ENCODE measurements at regions of chr3 and their contacts with region 1.

Region 1: DNA sequence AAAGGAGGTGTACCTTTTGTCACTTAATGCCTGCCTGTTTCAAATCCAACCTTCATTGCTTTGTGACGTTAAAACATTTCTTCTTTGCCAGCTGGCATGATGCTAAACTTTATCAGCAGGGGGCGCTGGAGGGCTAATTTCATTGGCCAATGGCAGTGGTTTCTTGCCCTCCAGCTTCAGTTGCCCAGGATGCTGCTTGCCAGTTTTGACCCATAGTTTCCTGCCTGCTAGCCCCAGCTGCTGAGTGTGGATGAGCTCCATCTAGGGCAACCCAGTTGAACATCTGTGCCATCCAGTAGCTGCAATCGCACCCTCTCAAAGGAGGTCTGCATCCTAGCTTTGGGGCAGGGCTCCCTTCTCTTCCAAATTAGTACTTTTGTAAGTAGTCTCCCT is 22.1 kb downstream of the ACKR2 start:
- DNase-seq: no peak
- H3K4me3 ChIP-seq: no peak overlapping the region
- H3K27ac ChIP-seq: no peak overlapping the region
- H3K4me1 ChIP-seq: peaks cover 0 to 12% (median 11%) of the 10 kb centered on the region in 4 donors
- H3K27me3 ChIP-seq: no peaks in the 10 kb centered on the region
- CTCF ChIP-seq: peak; percentile 78 to 90 (median 83)
- EP300 ChIP-seq: no peak
- POLR2A ChIP-seq: no peak

Region 2: DNA sequence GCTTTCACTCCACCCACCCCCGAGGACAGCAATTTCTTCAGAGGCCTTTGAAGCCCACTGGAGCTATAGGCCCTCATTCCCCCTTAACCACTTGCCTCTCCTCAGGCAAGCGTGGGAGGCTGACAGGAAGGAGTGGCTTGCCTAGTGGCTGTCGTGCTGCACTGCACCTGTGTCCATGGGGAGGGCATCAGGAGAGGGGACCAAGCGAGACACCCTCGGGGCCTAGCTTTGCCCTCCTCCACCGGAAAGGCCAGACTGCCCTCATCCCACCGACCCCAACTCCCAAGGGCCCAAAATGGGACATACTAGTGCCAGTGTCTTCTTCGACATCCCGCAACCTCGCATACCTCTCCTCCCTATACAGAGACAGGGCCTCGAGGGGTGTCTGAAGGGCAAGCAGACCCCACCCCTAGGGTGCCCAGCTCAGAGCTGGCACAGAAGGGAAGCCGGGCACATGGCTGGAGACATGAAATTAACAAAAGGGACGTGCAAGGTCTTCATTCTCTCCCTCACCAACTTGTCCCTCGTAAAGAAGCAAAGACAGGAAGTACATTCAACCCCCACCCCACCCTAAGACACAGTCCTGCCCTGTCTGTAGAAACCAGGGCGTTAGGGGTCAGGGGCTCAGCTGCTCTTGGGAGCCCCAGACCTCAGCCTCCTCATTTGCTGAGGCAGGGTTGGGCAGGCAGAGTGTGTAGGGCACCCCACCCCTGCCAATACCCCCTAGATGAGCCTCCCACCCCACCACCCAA is 304.5 kb before region 1 on chr3:
- intact Hi-C with region 1: no loop called
- DNase-seq: no peak
- H3K4me3 ChIP-seq: no peak overlapping the region
- H3K27ac ChIP-seq: no peak overlapping the region
- H3K4me1 ChIP-seq: peaks cover 0 to 4% (median 0%) of the 10 kb centered on the region in 4 donors
- H3K27me3 ChIP-seq: no peaks in the 10 kb centered on the region
- CTCF ChIP-seq: no peak
- EP300 ChIP-seq: no peak
- POLR2A ChIP-seq: no peak

Region 3: GRCh38 chr3:42880601-42881451 is 49.5 kb after region 1 on chr3:
- intact Hi-C with region 1: loop called (anchors 2 kb)
- DNase-seq: no peak
- H3K4me3 ChIP-seq: peak overlapping the region; percentile 60 to 64 (median 62)
- H3K27ac ChIP-seq: peak overlapping the region; percentile 76 to 80 (median 78)
- H3K4me1 ChIP-seq: peaks cover 7 to 12% (median 12%) of the 10 kb centered on the region in 4 donors
- H3K27me3 ChIP-seq: no peaks in the 10 kb centered on the region
- CTCF ChIP-seq: peak; percentile 94 to 97 (median 96)
- EP300 ChIP-seq: no peak
- POLR2A ChIP-seq: no peak